AG04450 (cell line): ENCODE measurements at regions of chr12 and their contacts with region 1.

Region 1: GRCh38 chr12:48851883-48852733 is at the start of gene DDX23:
- DNase-seq: peak; percentile 94
- H3K4me3 ChIP-seq: peak within 1 kb of the TSS; percentile 90
- H3K27ac ChIP-seq: peak within 1 kb of the TSS; percentile 47
- H3K27me3 ChIP-seq: peaks cover 4% of the 10 kb centered on the region
- CTCF ChIP-seq: no peak
- polyA plus RNA-seq, gene DDX23: 56.6 and 57.4 TPM in 2 replicates

Region 2: GRCh38 chr12:48744251-48745008 is 107.7 kb before region 1 on chr12:
- CTCF ChIA-PET with region 1: no interaction called
- POLR2A ChIA-PET with region 1: no interaction called
- DNase-seq: no peak
- H3K4me3 ChIP-seq: no peak overlapping the region
- H3K27ac ChIP-seq: no peak overlapping the region
- H3K27me3 ChIP-seq: peaks cover 12% of the 10 kb centered on the region
- CTCF ChIP-seq: no peak

Region 3: DNA sequence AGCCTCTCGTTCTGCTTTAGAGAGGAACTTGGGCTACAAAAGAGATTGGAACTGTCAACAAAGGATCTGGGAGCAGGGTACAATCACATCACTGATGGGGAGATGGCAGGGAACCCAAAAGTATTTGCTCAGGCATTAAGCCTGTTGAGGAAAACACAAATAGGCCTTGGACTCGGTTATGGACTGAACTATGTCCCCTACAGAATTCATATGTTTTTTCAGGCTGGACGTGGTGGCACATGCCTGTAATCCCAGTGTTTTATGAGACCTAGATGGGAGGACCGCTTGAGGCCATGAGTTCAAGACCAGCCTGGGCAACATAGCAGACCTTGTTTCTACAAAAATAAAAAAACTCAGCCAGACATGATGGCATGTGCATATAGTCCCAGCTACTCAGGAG is 14.1 kb before region 1 on chr12:
- CTCF ChIA-PET with region 1: no interaction called
- POLR2A ChIA-PET with region 1: no interaction called
- DNase-seq: no peak
- H3K4me3 ChIP-seq: no peak overlapping the region
- H3K27ac ChIP-seq: no peak overlapping the region
- H3K27me3 ChIP-seq: no peaks in the 10 kb centered on the region
- CTCF ChIP-seq: no peak

Region 4: GRCh38 chr12:48882315-48882687 is 30.2 kb after region 1 on chr12:
- CTCF ChIA-PET with region 1: interaction called, 411 read pairs
- POLR2A ChIA-PET with region 1: no interaction called
- DNase-seq: no peak
- H3K4me3 ChIP-seq: peak overlapping the region; percentile 27
- H3K27ac ChIP-seq: no peak overlapping the region
- H3K27me3 ChIP-seq: peaks cover 20% of the 10 kb centered on the region
- CTCF ChIP-seq: no peak

Region 5: DNA sequence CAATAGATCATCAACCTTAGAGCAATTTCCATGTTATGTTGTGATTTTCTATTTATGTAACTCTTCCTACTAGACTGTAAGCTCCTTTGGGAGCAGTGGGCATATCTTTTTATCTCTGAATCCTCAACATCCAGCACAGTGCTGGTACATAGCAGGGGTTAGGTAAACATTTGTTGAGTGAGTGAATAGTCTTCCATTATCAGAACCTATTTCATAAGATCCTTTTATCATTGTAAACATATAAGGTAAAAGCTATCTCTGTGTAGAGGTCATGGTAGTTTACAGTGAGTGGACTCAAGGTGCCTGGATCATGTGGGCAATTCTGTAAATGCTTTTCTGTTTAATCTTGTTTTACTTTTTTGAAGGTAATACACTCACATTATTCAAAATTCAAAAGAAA is 58.1 kb after region 1 on chr12:
- CTCF ChIA-PET with region 1: interaction called, 11 read pairs
- POLR2A ChIA-PET with region 1: no interaction called
- DNase-seq: no peak
- H3K4me3 ChIP-seq: no peak overlapping the region
- H3K27ac ChIP-seq: no peak overlapping the region
- H3K27me3 ChIP-seq: no peaks in the 10 kb centered on the region
- CTCF ChIP-seq: no peak

Region 6: GRCh38 chr12:48946205-48946604 is 94.1 kb after region 1 on chr12:
- CTCF ChIA-PET with region 1: interaction called, 16 read pairs
- POLR2A ChIA-PET with region 1: no interaction called
- DNase-seq: peak; percentile 45
- H3K4me3 ChIP-seq: no peak overlapping the region
- H3K27ac ChIP-seq: no peak overlapping the region
- H3K27me3 ChIP-seq: no peaks in the 10 kb centered on the region
- CTCF ChIP-seq: no peak

Region 7: DNA sequence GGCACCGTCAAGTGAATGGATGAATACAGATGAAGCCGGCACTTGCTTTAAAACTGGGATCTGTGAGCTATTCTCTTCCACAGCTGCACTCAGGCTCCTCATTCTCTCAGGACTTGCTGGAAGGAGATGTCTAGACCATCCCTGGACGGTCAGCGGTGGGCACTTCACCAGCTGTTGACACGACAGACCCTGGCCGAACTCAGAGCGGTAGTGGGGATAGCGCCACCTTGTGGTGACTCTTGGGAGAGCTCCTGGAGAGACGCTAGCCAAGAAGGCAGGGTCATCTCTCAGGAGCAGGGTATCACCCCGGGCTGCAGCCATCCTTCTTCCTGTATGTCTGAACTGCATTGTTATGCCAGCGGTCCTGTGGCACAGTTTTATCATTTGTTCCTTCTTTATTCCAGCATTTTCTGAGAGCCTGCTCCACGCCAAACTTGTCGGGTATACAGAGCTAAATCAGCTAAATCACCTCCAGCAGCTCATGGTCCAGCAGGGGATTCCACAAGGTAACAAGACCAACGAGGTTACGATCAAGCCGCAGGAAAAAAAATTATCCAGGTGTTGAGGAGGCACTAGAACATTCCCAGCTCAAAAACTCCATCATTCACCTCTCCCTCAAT is 136.0 kb after region 1 on chr12:
- CTCF ChIA-PET with region 1: interaction called, 42 read pairs
- POLR2A ChIA-PET with region 1: interaction called, 4 read pairs
- DNase-seq: no peak
- H3K4me3 ChIP-seq: no peak overlapping the region
- H3K27ac ChIP-seq: no peak overlapping the region
- H3K27me3 ChIP-seq: peaks cover 61% of the 10 kb centered on the region
- CTCF ChIP-seq: peak; percentile 87